Right ventricle myocardium inferior (tissue), 1 donor: ENCODE measurements at regions of chr10 and their contacts with region 1.

Region 1: GRCh38 chr10:97334370-97335175 is at the start of gene FRAT2:
- DNase-seq: peak; percentile 97
- ATAC-seq: peak; percentile 98
- total RNA-seq, gene FRAT2: 9.1 TPM

Region 2: GRCh38 chr10:97210543-97210961 is 124.0 kb before region 1 on chr10:
- intact Hi-C with region 1: no loop called
- DNase-seq: no peak
- ATAC-seq: peak; percentile 47

Region 3: GRCh38 chr10:97278491-97278989 is 56.0 kb before region 1 on chr10:
- intact Hi-C with region 1: loop called (anchors 2 kb)
- DNase-seq: no peak
- ATAC-seq: peak; percentile 88

Region 4: DNA sequence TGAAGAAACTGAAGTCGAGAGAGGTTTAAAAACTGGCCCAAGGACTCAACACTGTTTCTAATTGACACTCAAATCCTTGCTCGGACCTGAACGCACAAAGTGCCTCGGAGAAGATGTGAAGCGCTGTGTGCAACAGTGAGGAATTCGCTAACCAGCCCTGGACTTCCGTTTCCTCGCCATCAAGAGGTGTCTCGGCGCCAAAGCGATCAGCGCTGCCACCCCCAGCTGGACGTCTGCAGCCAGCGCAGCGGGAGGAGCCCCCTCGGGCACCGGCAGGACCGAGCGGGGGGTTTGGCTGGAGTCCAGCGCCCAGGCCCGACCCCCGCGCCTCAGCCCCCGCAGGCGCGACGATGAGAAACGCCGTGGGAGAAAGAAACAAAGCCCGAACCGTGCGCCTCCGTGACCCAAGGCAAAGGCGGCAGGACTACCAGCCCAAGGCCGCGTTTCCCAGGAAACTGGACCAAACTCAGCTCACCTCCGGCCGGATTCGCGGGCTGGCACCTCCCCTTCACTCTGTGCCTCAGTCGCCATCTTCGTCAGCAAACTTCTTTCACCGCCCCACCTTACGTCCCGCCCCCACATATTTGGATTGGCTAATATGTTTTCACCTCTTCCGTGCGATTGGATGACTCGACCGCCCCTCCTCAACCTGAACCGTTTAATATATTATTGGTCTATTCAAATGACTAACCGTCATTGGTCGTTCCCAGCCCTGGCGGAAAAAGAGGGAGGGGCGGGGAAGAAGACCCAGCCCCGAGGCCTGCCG is 42.3 kb before region 1 on chr10 and contains the start of gene ARHGAP19:
- intact Hi-C with region 1: loop called (anchors 5 kb)
- DNase-seq: peak; percentile 96
- ATAC-seq: peak; percentile 99
- total RNA-seq, gene ARHGAP19: 5.6 TPM

Region 5: DNA sequence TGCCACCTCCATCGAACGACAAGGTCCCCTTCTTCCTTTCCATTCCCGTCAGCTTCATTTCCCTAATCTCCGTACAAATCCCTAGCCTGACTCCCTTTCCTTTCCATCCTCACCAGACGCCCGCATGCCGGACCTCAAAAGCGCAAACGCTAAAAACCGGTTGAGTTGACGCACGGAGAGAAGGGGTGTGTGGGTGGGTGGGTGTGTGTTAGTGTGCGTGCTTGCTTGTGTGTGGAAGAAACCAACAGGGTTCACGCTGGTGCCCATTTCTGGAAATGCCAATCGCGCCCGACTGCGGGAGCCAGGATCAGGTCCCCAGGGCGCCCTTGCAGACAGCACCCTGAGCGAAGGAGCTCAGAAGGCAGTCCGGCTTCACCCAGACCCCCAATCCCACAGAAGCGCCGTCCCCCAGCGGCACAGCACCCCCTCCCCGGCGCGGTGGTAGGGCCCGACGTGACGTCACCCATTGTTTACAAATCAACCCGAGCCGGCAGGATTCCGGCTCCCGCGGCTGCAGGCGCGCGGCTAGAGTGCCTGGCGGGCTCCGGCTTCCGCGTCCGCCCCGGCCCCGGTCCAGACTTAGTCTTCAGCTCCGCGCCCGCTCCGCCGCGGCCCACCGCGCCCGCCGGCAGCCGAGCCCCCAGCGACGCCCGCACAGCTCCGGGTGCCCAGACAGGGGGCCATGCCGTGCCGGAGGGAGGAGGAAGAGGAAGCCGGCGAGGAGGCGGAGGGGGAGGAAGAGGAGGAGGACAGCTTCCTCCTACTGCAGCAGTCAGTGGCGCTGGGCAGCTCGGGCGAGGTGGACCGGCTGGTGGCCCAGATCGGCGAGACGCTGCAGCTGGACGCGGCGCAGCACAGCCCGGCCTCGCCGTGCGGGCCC is 15.6 kb before region 1 on chr10 and contains the start of gene FRAT1:
- intact Hi-C with region 1: loop called (anchors 2 kb)
- DNase-seq: peak; percentile 97
- ATAC-seq: peak; percentile 87
- total RNA-seq, gene FRAT1: 5.4 TPM

Region 6: DNA sequence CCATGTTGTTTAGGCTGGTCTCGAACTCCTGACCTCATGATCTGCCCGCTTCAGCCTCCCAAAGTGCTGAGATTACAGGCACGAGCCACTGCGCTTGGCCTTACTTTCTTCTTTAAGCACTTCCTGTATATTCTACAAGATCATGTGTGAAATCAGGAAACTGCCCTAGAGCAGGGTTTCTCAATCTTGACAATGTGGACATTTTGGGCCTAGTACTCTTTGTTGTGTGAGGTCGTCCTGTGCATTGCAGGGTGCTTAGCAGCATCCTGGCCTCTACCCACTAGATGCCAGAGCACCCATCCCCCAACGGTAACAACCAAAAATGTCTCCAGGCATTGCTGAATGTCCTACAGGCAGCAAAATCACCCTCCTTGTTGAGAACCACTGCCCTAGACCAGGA is 41.8 kb after region 1 on chr10:
- intact Hi-C with region 1: no loop called
- DNase-seq: no peak
- ATAC-seq: no peak